Activated CD4-positive, alpha-beta T cell treated with anti-CD3 and anti-CD28 coated beads, Interleukin-2, amount 10 ng/mL, durations not matched to agents 24 days and 14 days (primary cell): ENCODE measurements at regions of chr3 and their contacts with region 1.

Region 1: DNA sequence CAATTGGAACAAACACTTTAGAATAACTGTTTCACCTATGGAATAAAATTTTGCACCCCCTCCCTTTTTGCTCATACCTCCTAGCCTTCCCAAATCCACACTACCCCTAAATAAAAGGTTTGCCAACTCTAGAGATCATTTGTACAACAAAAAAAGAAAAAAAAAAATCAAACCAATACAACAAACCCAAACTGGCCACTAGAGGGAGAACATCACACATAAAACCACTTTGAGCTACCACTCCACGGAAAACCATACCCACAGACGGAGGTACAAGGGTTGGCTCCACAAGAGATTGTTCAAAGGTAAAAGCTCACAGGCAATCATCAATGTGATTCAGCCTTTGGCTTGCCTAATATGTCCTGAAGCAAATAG is 47.6 kb downstream of the SETMAR start:
- DNase-seq: peak; percentile 87
- H3K4me3 Mint-ChIP-seq: peak overlapping the region; percentile 56
- H3K27ac Mint-ChIP-seq: peak overlapping the region; percentile 56
- H3K4me1 Mint-ChIP-seq: peaks cover 21% of the 10 kb centered on the region
- H3K27me3 Mint-ChIP-seq: peaks cover 1% of the 10 kb centered on the region

Region 2: DNA sequence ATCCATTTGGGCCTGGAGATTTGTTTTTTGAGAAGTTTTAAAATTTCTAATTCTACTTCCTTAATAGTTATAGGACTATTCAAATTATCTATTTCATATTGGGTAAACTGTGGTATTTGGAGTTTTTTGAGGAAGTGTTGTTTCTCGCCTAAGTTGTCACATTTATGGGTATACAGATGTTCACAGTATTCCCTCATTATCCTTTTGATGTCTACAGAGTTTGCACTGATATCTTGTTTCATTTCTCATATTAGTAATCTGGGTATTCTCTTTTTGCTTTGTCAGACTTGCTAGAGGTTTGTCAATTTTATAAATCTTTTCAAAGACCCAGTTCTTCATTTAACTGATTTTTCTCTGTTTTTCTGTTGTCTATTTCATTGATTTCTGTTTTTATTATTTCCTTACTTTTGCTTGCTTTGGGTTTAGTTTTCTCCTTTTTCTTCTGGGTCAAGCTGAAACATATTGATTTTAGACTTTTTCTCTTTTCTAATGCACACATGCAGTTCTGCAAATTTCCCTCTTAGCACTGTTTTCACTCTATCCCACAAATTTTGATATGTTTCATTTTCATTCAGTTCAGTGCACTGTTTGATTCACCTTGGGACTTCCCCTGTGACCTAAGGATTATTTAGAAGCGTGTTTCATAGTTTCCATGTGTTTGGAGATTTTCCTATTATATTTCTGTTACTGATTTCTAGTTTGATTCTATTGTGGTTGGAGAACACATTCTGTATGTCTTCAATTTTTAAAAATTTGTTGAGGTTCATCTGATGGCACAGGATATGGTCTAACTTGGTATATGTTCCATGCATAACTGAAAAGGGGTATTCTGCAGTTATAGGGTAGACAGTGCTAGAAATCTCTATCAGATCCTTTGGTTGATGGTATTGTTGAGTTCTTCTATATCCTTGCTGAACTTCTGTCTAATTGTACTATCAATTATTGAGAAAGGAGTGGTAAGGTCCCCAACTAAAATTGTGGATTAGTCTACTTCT is 36.7 kb after region 1 on chr3:
- intact Hi-C with region 1: loop called (anchors 1 kb)
- DNase-seq: peak; percentile 48
- H3K4me3 Mint-ChIP-seq: peak overlapping the region; percentile 1
- H3K27ac Mint-ChIP-seq: peak overlapping the region; percentile 84
- H3K4me1 Mint-ChIP-seq: peaks cover 35% of the 10 kb centered on the region
- H3K27me3 Mint-ChIP-seq: no peaks in the 10 kb centered on the region

Region 3: DNA sequence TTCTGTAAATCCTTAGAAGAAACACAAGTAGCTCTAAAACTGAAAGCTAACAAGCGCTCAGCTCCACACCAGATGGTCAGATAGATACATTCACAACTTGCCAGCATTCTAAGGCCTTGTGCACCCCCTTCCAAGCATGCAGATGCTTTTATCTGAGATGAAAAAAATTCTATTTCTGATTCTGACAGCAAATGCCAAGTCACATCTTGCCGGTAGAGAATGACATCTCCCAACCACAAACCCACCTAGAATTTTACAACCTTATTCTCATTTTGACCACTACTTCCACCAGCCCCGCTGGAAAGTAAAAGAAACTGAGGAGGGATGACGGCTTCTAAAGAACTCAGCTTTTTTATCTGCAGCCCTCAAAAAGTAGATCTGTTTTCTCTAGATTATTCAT is 58.6 kb after region 1 on chr3:
- intact Hi-C with region 1: loop called (anchors 1 kb)
- DNase-seq: peak; percentile 71
- H3K4me3 Mint-ChIP-seq: peak overlapping the region; percentile 57
- H3K27ac Mint-ChIP-seq: peak overlapping the region; percentile 87
- H3K4me1 Mint-ChIP-seq: peaks cover 43% of the 10 kb centered on the region
- H3K27me3 Mint-ChIP-seq: no peaks in the 10 kb centered on the region

Region 4: GRCh38 chr3:4466741-4467521 is 116.2 kb after region 1 on chr3 and contains the start of gene SUMF1:
- intact Hi-C with region 1: loop called (anchors 1 kb)
- DNase-seq: peak; percentile 93
- H3K4me3 Mint-ChIP-seq: peak within 1 kb of the TSS; percentile 92
- H3K27ac Mint-ChIP-seq: peak within 1 kb of the TSS; percentile 96
- H3K4me1 Mint-ChIP-seq: peaks cover 12% of the 10 kb centered on the region
- H3K27me3 Mint-ChIP-seq: peaks cover under 1% of the 10 kb centered on the region
- total RNA-seq, gene SUMF1: 6.7 and 7.4 TPM in 2 replicates

Region 5: DNA sequence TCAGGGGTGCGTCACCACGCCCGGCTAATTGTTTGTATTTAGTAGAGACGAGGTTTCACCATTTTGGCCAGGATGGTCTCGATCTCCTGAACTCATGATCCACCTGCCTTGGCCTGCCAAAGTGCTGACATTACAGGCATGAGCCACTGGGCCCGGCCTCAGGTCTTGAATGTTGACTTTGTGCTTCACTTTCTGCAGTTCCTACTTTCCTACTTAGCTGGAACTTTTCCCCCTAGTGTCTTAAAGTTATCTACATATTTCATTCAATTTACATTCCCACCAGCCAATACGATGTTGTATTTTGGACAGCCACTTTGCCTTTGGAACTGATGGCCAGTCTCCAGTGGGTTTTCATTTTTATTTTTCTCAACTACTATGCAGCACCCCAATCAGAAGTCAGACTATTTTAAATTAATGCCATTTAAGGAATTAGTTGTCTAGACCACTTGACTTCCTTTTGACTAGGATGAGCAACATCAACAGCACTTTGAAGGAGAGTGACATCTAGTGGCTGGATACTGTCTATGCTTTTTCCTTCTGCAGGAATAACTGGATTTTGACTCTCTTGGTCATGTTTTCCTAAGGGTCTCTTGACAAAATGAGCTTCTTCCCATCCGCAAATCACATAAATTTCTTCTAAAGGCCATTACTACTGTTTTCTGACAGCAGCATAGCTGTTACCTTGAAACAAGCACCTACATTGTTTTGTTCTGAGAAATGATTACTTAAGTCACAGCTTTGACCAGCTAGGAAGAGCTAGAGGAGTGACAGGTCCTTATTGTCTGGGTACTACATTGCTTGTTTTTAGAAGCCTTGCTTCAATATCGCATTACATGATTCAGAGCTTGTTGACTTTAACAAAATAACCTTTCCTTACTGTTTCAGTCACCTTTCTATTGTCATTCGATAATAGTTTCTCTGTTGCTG is 282.6 kb after region 1 on chr3:
- intact Hi-C with region 1: loop called (anchors 1 kb)
- DNase-seq: peak; percentile 71
- H3K4me3 Mint-ChIP-seq: no peak overlapping the region
- H3K27ac Mint-ChIP-seq: no peak overlapping the region
- H3K4me1 Mint-ChIP-seq: peaks cover 5% of the 10 kb centered on the region
- H3K27me3 Mint-ChIP-seq: no peaks in the 10 kb centered on the region